Activated naive CD4-positive, alpha-beta T cell treated with anti-CD3 and anti-CD28 coated beads for 36 hours (primary cell): ENCODE measurements at regions of chr1 and their contacts with region 1.

Region 1: DNA sequence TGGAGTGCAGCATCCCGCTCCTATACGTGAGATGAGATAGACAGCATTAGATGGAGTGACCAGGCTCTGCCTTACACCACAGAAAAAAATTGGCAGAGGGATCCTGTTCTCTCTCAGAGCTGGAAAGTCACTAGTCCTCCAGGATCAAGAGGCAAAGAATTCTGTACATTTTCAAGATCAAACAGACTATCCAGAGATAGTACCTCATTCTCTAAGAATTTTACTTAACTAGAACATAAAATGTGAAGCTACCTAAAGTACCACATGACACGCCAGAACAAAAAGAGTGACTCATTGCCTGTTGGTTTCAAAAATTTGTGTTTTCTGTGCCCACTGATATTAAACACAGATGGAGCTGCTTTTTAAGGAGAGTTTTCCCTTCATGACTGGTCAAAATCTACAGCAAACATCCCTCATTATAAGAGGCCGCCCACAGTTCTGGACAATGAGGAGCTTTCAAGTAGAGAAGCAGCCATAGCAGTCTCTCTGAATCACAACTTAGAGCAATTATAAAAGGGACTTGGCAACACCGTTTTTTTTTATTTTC is 32.3 kb downstream of the CD160 start:
- DNase-seq: no peak
- H3K4me3 Mint-ChIP-seq: no peak overlapping the region
- H3K27ac Mint-ChIP-seq: no peak overlapping the region
- H3K4me1 Mint-ChIP-seq: peaks cover 7% of the 10 kb centered on the region
- H3K27me3 Mint-ChIP-seq: no peaks in the 10 kb centered on the region

Region 2: GRCh38 chr1:145804235-145805045 is 52.9 kb after region 1 on chr1:
- CTCF ChIA-PET with region 1: interaction called, 3 read pairs
- intact Hi-C with region 1: loop called (anchors 5 kb)
- DNase-seq: no peak
- H3K4me3 Mint-ChIP-seq: no peak overlapping the region
- H3K27ac Mint-ChIP-seq: no peak overlapping the region
- H3K4me1 Mint-ChIP-seq: peaks cover 33% of the 10 kb centered on the region
- H3K27me3 Mint-ChIP-seq: no peaks in the 10 kb centered on the region